Mammary epithelial cell (primary cell): ENCODE measurements at regions of chr1 and their contacts with region 1.

Region 1: DNA sequence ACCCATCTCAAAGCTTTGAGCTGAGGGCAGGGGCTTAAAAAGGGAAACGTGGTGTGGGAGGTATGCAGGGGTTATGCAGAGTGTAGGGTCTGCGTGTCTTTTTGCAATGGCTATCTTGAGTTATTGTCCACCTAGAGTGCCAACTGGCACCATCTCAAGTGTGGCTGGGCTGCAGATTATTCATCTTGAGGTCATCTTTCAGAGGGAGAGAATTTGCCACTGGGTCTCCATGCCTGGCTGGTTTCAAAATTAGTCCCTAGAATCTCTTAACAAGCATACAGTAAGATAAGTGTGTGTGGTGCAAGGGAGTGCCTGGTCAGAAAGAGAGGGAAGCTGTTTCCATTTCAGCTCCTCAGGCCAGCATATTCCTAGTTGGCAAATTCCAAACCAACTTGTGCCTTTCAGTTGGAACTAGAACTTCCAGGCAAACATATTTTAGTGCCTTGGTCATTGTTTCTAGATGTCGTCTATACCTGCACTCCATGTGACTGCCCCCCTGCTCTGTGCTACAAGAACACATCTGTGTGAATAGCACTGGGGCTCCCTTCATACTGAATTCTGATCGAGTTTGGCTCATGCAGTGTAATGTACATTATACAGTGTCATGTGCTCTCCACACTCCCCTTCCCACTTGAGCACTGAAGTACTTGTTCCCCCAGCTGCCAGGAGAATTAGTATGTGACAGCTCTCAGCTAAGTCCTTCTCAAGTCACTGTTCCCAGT is 5.0 kb upstream of the OR2T8 start:
- DNase-seq: peak; percentile 3
- H3K4me3 ChIP-seq: no peak overlapping the region
- H3K27ac ChIP-seq: no peak overlapping the region
- H3K4me1 ChIP-seq: no peaks in the 10 kb centered on the region
- H3K27me3 ChIP-seq: no peaks in the 10 kb centered on the region
- CTCF ChIP-seq: no peak

Region 2: GRCh38 chr1:247447162-247447909 is 467.8 kb before region 1 on chr1:
- CTCF ChIA-PET with region 1: interaction called, 11 read pairs
- dilution Hi-C with region 1: no loop called
- in situ Hi-C with region 1: no loop called
- intact Hi-C with region 1: no loop called
- DNase-seq: no peak
- H3K4me3 ChIP-seq: no peak overlapping the region
- H3K27ac ChIP-seq: no peak overlapping the region
- H3K4me1 ChIP-seq: no peaks in the 10 kb centered on the region
- H3K27me3 ChIP-seq: no peaks in the 10 kb centered on the region
- CTCF ChIP-seq: no peak